ENCODE measurements at regions of chr2 and their contacts with region 1.

Region 1: GRCh38 chr2:45585267-45585861 is 25.7 kb downstream of the SRBD1 start:
- DNase-seq: peak; percentile 43 to 77
- ATAC-seq: peak; percentile 91 to 92
- H3K4me3 ChIP-seq: no peak overlapping the region
- H3K27ac ChIP-seq: no peak overlapping the region
- H3K4me1 ChIP-seq: peaks cover 9% of the 10 kb centered on the region; the same call in 2 of the 3 replicates
- CTCF ChIP-seq: peak; percentile 77
- EP300 ChIP-seq: no peak
- POLR2A ChIP-seq: no peak
- RAD21 ChIP-seq: peak; percentile 64 to 65

Region 2: DNA sequence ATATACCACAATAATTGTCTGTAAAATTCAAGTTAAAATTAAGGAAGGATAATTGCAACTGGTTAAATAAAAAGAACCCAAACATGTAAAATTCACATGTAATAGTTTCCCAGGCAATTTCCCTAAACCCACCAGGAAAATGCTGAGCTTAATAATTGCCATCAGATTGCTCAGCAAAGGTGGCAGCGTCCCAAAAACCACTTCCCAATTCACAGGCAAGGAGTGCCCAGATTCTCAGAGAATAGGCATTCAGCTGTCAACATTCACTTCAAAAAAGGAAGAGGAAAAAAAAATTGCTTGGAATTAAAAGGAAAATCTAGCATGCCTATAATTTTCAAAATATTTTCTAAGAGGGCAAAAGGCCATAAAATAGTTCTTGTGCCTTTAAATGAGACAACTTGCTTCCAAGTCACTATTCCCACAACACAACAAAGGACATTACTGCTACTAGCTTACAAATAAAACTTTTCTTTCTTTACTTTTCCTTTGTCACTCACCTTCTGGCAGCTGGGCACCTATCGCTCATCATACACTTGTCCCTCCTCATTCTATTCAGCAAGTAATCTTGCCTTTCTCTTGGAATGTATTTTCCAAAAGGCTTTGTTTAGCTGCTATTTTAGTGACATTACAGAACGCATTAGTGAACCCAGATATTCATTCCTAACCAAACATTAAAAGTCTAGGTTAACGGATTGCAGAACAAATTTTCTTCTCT is 10.5 kb after region 1 on chr2:
- CTCF ChIA-PET with region 1: interaction called, 14 read pairs
- POLR2A ChIA-PET with region 1: interaction called, 4 read pairs
- DNase-seq: no peak
- ATAC-seq: no peak
- H3K4me3 ChIP-seq: no peak overlapping the region
- H3K27ac ChIP-seq: no peak overlapping the region
- H3K4me1 ChIP-seq: peaks cover 5% of the 10 kb centered on the region; the same call in 1 of the 3 replicates
- CTCF ChIP-seq: no peak
- EP300 ChIP-seq: no peak
- POLR2A ChIP-seq: no peak
- RAD21 ChIP-seq: no peak

Region 3: DNA sequence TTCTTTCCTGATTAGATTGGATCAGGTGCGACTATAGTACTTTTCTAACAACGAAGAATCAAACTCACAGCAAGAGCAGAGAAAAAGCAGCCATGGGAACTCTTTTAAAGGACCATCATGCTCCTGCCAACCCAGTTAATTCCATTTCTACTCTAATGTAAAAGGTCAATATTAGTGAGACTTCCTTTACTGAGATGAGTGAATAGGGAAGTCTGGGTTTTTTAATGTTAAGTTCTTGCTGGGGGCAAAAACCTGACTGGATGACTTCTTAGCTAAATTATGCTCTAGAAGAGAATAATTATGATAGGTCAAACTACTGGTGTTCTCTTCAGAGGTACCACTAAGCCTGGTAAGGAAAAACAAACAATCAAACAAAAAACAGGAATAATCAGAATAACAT is 17.3 kb after region 1 on chr2:
- CTCF ChIA-PET with region 1: interaction called, 14 read pairs
- POLR2A ChIA-PET with region 1: no interaction called
- DNase-seq: no peak
- ATAC-seq: no peak
- H3K4me3 ChIP-seq: no peak overlapping the region
- H3K27ac ChIP-seq: no peak overlapping the region
- H3K4me1 ChIP-seq: peaks cover 3% of the 10 kb centered on the region; the same call in 1 of the 3 replicates
- CTCF ChIP-seq: no peak
- EP300 ChIP-seq: no peak
- POLR2A ChIP-seq: no peak
- RAD21 ChIP-seq: no peak

Region 4: GRCh38 chr2:45611020-45611737 is 25.8 kb after region 1 on chr2 and contains the start of gene SRBD1:
- CTCF ChIA-PET with region 1: interaction called, 13 read pairs
- POLR2A ChIA-PET with region 1: interaction called, 5 read pairs
- DNase-seq: peak; percentile 87 to 97
- ATAC-seq: peak; percentile 97 to 98
- H3K4me3 ChIP-seq: peak within 1 kb of the TSS; percentile 76
- H3K27ac ChIP-seq: peak within 1 kb of the TSS; percentile 87 to 89
- H3K4me1 ChIP-seq: peaks cover 37% of the 10 kb centered on the region
- CTCF ChIP-seq: no peak
- EP300 ChIP-seq: no peak
- POLR2A ChIP-seq: peak; percentile 81
- RAD21 ChIP-seq: no peak
- polyA plus RNA-seq, gene SRBD1: 10.6 and 13.7 TPM in 2 replicates